ENCODE measurements at regions of chr16 and their contacts with region 1.

Region 1: DNA sequence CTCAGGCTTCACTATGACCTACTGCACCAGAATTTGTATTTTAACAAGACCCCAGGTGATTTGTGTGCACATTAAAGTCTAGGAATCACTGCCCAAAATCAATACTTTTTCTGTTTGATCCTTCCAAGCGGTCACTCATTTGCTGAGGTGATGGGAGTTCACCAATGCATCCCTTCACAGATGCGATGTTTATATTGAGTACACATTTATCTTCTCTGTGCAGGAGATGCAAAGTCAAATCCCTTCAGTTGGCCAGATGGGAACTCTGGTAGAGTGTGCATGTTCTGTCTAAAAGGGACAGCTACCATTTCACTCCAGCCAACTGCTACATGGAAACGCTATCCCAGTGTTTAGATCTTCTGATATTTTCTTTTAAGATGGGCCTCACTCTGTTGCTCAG is 122.6 kb upstream of the HS3ST2 start:
- DNase-seq: no peak
- ATAC-seq: no peak
- H3K4me3 ChIP-seq: no peak overlapping the region
- H3K27ac ChIP-seq: no peak overlapping the region
- H3K4me1 ChIP-seq: no peaks in the 10 kb centered on the region
- H3K27me3 ChIP-seq: peaks cover 35% of the 10 kb centered on the region
- CTCF ChIP-seq: no peak
- POLR2A ChIP-seq: no peak
- RAD21 ChIP-seq: no peak

Region 2: GRCh38 chr16:22670551-22671041 is 20.7 kb before region 1 on chr16:
- CTCF ChIA-PET with region 1: no interaction called
- POLR2A ChIA-PET with region 1: no interaction called
- RAD21 ChIA-PET with region 1: no interaction called
- intact Hi-C with region 1: loop called (anchors 2 kb)
- DNase-seq: peak; percentile 65
- ATAC-seq: peak; percentile 97
- H3K4me3 ChIP-seq: no peak overlapping the region
- H3K27ac ChIP-seq: no peak overlapping the region
- H3K4me1 ChIP-seq: peaks cover 0 to 9% of the 10 kb centered on the region in 2 experiments; a peak in 2 of 4 replicates
- H3K27me3 ChIP-seq: peaks cover 27% of the 10 kb centered on the region
- CTCF ChIP-seq: no peak
- POLR2A ChIP-seq: no peak
- RAD21 ChIP-seq: no peak

Measured in HCT116 (cell line).